Aorta (tissue), 5 donors: ENCODE measurements at regions of chr15 and their contacts with region 1.

Region 1: GRCh38 chr15:75029378-75030022 is 6.1 kb downstream of the PPCDC start:
- DNase-seq: peak; percentile 97 to 99
- ATAC-seq: peak; percentile 94
- H3K4me3 ChIP-seq: no peak overlapping the region
- H3K27ac ChIP-seq: peak overlapping the region; percentile 15 to 26
- H3K4me1 ChIP-seq: no peaks in the 10 kb centered on the region
- H3K27me3 ChIP-seq: no peaks in the 10 kb centered on the region

Region 2: GRCh38 chr15:74978503-74978902 is 51.0 kb before region 1 on chr15:
- intact Hi-C with region 1: no loop called
- DNase-seq: peak in 1 of 2 donors; percentile 14
- ATAC-seq: no peak
- H3K4me3 ChIP-seq: no peak overlapping the region
- H3K27ac ChIP-seq: no peak overlapping the region
- H3K4me1 ChIP-seq: no peaks in the 10 kb centered on the region
- H3K27me3 ChIP-seq: no peaks in the 10 kb centered on the region

Region 3: GRCh38 chr15:75008629-75009326 is 20.7 kb before region 1 on chr15:
- intact Hi-C with region 1: no loop called
- DNase-seq: no peak
- ATAC-seq: no peak
- H3K4me3 ChIP-seq: no peak overlapping the region
- H3K27ac ChIP-seq: no peak overlapping the region
- H3K4me1 ChIP-seq: no peaks in the 10 kb centered on the region
- H3K27me3 ChIP-seq: no peaks in the 10 kb centered on the region

Region 4: DNA sequence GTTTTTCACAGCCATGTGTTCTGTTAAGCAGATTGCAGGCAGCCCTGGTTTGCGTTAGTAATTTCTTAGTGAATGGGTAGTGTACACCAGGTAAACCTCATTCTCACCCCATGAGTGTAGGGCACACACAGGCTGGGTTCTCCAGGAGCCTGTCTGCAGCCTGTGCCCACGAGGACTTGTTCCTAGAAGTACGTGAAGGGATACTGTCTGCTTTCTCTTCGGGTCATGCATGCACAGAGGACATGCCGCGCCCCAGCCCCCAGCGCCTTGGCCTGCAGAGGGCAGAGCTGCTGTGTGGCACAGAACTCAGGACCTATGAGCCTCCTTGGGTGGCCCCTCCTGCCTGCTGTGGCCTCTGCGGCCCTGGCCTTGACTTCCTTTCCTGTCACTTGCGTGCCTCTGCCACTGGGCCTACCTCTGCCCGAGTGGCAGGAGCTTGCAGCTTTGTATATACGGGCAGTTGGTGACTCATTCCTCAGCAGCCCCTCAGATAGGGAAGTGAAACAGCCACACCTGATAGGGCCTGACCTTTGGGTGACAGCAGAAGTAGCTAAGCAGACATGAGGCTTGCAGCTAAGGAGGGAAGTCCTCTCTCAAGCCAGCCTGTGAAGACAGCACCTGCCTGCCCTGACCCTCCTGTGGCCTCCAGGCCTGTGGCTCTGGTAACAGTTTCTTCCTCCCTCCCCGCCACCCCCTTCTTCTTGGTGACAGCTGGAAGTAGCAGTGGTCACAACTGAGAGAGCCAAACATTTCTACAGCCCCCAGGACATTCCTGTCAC is 13.4 kb after region 1 on chr15:
- intact Hi-C with region 1: loop called (anchors 1 to 2 kb)
- DNase-seq: peak; percentile 90 to 91
- ATAC-seq: peak; percentile 78
- H3K4me3 ChIP-seq: no peak overlapping the region
- H3K27ac ChIP-seq: peak overlapping the region; percentile 20 to 42
- H3K4me1 ChIP-seq: no peaks in the 10 kb centered on the region
- H3K27me3 ChIP-seq: no peaks in the 10 kb centered on the region

Region 5: DNA sequence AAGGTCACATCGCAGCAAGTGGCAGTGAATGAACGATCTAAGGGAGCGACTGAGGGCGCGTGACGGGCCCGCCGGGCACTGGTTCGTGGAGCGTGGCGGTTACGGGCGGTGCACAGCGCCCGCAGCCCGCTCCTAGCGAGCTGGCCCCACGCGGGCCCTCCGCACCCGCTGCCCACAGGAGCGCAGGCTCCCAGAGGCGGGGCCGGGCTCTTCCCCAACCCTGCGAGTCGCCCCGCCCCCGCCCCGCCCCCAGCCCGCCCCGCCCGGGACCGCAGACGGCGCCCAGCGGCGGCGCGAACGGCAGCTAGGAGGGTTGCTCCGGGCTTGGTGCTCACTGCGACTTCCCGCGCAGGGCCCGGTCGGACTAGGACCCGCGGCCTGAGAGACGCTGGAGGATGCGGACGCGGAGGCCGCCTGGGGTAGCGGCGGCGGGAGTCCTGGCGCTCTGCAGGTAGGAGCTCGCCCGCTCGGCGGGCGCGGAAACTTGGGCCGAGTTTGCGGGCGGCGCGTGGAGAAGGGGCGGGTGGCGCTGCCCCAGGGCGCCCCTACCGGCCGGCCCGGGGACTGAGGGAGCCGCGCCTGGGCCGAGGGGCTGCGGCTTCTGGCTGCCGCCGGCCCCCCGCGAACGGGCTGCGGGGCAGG is 172.2 kb after region 1 on chr15 and contains the start of gene C15orf39:
- intact Hi-C with region 1: loop called (anchors 1 kb)
- DNase-seq: peak; percentile 80 to 92
- ATAC-seq: peak; percentile 88
- H3K4me3 ChIP-seq: peak within 1 kb of the TSS; percentile 60 to 63
- H3K27ac ChIP-seq: peak within 1 kb of the TSS in 1 of 2 donors; percentile 60
- H3K4me1 ChIP-seq: no peaks in the 10 kb centered on the region
- H3K27me3 ChIP-seq: no peaks in the 10 kb centered on the region
- total RNA-seq, gene C15orf39: 24.6 to 26.8 TPM

Region 6: GRCh38 chr15:76258471-76258870 is 1229.0 kb after region 1 on chr15:
- intact Hi-C with region 1: no loop called
- DNase-seq: no peak
- ATAC-seq: no peak
- H3K4me3 ChIP-seq: no peak overlapping the region
- H3K27ac ChIP-seq: no peak overlapping the region
- H3K4me1 ChIP-seq: no peaks in the 10 kb centered on the region
- H3K27me3 ChIP-seq: no peaks in the 10 kb centered on the region